MCF 10A (cell line): ENCODE measurements at regions of chr20 and their contacts with region 1.

Region 1: DNA sequence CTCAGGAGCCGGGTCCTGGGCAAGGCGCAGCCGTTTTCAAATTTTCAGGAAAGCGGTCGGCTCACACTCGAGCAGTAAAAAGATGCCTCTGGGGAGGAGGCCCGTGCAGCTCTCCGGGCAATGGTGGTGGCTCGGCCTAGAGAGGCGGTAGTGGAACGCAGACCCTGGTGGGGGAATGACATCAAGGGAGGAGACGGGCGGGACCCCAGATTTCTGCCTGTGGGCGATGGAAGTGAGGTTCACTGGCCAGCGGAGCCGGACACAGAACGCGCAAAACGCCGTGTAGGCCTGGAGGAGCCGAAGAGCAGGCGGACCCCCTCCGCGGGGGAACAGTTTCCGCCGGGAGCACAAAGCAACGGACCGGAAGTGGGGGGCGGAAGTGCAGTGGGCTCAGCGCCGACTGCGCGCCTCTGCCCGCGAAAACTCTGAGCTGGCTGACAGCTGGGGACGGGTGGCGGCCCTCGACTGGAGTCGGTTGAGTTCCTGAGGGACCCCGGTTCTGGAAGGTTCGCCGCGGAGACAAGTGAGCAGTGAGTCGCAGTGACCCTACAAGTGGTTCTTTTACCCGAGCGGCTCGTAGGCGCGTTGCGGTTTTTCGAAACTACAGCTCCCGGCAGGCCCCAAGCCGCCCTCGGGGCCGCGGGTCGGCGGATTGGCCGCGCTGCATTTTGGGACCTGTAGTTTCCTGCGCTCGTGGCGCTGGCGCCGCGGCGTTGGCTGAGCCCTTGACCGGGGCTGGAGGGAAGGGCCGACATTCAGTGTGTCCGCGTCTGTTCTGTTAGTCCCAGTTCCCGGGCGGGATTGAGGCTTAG is at the start of gene RTEL1:
- DNase-seq: peak; percentile 88
- H3K4me3 Mint-ChIP-seq: peak within 1 kb of the TSS; percentile 88
- H3K27ac Mint-ChIP-seq: peak within 1 kb of the TSS; percentile 97
- H3K4me1 Mint-ChIP-seq: peaks cover 9% of the 10 kb centered on the region
- H3K27me3 Mint-ChIP-seq: no peaks in the 10 kb centered on the region
- CTCF ChIP-seq: no peak
- total RNA-seq, gene RTEL1: 27.9 and 39.2 TPM in 2 replicates

Region 2: DNA sequence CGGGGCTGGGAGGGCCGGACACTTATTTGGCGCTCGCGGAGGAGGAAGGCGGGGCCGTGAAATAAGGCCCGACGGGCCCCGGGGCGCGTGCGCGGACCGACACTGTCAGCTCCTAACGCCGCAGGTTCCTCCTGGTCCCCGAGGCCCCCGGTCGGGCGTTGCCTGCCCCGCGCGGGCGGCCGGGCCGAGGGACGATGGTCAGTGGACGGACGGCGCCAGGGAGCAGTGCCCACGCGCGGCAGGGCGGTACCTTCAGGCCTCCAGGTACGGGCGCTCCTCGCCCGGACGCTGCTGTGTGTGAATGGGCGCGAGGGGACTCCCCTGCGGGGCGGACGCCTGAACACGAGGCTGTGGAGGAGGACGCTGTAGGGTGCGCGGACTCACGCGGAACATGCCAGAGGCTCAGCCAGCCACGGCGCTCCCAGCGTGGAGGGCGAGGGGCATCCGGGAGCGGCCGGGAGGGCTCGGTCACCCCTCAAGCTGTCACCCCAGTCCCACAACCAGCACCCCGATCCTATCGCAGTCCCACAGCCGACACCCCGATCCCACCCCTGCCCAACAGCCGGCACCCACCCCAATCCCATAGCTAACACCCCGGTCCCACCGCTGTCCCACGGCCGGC is 30.9 kb before region 1 on chr20:
- CTCF ChIA-PET with region 1: no interaction called
- POLR2A ChIA-PET with region 1: interaction called, 27 read pairs
- intact Hi-C with region 1: no loop called
- DNase-seq: peak; percentile 93
- H3K4me3 Mint-ChIP-seq: peak overlapping the region; percentile 79
- H3K27ac Mint-ChIP-seq: peak overlapping the region; percentile 88
- H3K4me1 Mint-ChIP-seq: peaks cover 7% of the 10 kb centered on the region
- H3K27me3 Mint-ChIP-seq: no peaks in the 10 kb centered on the region
- CTCF ChIP-seq: no peak

Region 3: GRCh38 chr20:63672666-63673065 is 14.5 kb after region 1 on chr20:
- CTCF ChIA-PET with region 1: interaction called, 4 read pairs
- POLR2A ChIA-PET with region 1: interaction called, 10 read pairs
- intact Hi-C with region 1: no loop called
- DNase-seq: no peak
- H3K4me3 Mint-ChIP-seq: no peak overlapping the region
- H3K27ac Mint-ChIP-seq: no peak overlapping the region
- H3K4me1 Mint-ChIP-seq: no peaks in the 10 kb centered on the region
- H3K27me3 Mint-ChIP-seq: no peaks in the 10 kb centered on the region
- CTCF ChIP-seq: no peak

Region 4: DNA sequence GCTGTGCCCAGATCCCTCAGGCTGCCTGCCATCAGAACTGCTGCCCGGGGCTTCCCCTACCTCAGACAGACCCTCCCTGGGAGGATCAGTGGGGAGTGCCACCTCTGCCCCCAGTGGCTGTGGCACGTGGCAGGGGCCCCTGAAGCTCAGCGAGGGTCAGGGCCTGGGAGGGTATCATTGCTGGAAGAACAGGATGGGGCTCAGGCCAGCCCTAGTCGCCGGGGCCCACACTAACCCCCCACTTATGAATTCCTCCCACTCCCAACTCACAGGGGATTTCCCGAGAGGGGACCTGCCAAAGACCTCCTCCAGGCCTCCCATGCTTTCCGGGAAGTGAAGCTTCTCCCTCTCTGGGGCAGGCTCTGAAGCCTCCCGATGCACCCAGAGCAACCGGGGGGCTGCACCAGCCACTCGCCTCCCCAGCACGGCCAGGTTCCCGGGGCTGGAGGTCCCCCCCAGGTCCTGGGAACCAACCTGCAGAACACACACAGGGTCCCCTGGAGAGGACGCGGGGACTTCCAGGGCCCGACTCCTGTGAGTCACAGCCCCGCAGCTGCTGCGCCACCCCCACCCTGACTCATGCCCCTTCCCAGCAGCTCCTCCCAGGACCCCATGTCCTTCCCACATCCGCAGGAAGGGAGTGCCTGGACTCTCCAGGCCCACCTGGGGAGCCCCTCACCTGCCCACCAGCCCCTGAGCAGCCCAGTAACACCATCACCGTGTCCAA is 40.8 kb after region 1 on chr20:
- CTCF ChIA-PET with region 1: interaction called, 3 read pairs
- POLR2A ChIA-PET with region 1: interaction called, 15 read pairs
- intact Hi-C with region 1: loop called (anchors 5 kb)
- DNase-seq: peak; percentile 94
- H3K4me3 Mint-ChIP-seq: peak overlapping the region; percentile 72
- H3K27ac Mint-ChIP-seq: peak overlapping the region; percentile 75
- H3K4me1 Mint-ChIP-seq: peaks cover 17% of the 10 kb centered on the region
- H3K27me3 Mint-ChIP-seq: no peaks in the 10 kb centered on the region
- CTCF ChIP-seq: no peak

Region 5: GRCh38 chr20:63980806-63981728 is 322.9 kb after region 1 on chr20 and contains the start of gene PRPF6:
- CTCF ChIA-PET with region 1: no interaction called
- POLR2A ChIA-PET with region 1: interaction called, 10 read pairs
- intact Hi-C with region 1: no loop called
- DNase-seq: peak; percentile 96
- H3K4me3 Mint-ChIP-seq: peak within 1 kb of the TSS; percentile 79
- H3K27ac Mint-ChIP-seq: peak within 1 kb of the TSS; percentile 92
- H3K4me1 Mint-ChIP-seq: peaks cover 30% of the 10 kb centered on the region
- H3K27me3 Mint-ChIP-seq: no peaks in the 10 kb centered on the region
- CTCF ChIP-seq: peak; percentile 77
- total RNA-seq, gene PRPF6: 70.9 and 88.5 TPM in 2 replicates